Caco-2 (cell line): ENCODE measurements at regions of chr10 and their contacts with region 1.

Region 1: GRCh38 chr10:58467931-58468635 is 44.6 kb upstream of the BICC1 start:
- DNase-seq: peak; percentile 50 to 64
- H3K4me3 ChIP-seq: no peak overlapping the region
- H3K4me3 Mint-ChIP-seq: peak overlapping the region; percentile 39
- H3K27ac Mint-ChIP-seq: peak overlapping the region; percentile 69
- H3K4me1 ChIP-seq: peaks cover 45% of the 10 kb centered on the region
- H3K4me1 Mint-ChIP-seq: peaks cover 30% of the 10 kb centered on the region
- H3K27me3 ChIP-seq: no peaks in the 10 kb centered on the region
- H3K27me3 Mint-ChIP-seq: no peaks in the 10 kb centered on the region
- CTCF ChIP-seq: no peak

Region 2: GRCh38 chr10:58268870-58269605 is 199.0 kb before region 1 on chr10 and contains the start of gene CISD1:
- CTCF ChIA-PET with region 1: no interaction called
- POLR2A ChIA-PET with region 1: interaction called, 7 read pairs
- intact Hi-C with region 1: loop called (anchors 1 kb)
- DNase-seq: peak; percentile 100
- H3K4me3 ChIP-seq: peak within 1 kb of the TSS; percentile 100
- H3K4me3 Mint-ChIP-seq: peak within 1 kb of the TSS; percentile 96
- H3K27ac Mint-ChIP-seq: peak within 1 kb of the TSS; percentile 98
- H3K4me1 ChIP-seq: peaks cover 18% of the 10 kb centered on the region
- H3K4me1 Mint-ChIP-seq: peaks cover 7% of the 10 kb centered on the region
- H3K27me3 ChIP-seq: no peaks in the 10 kb centered on the region
- H3K27me3 Mint-ChIP-seq: no peaks in the 10 kb centered on the region
- CTCF ChIP-seq: no peak
- total RNA-seq, gene CISD1: 98.3 and 99.3 TPM in 2 replicates

Region 3: GRCh38 chr10:58311026-58311425 is 157.1 kb before region 1 on chr10:
- CTCF ChIA-PET with region 1: no interaction called
- POLR2A ChIA-PET with region 1: no interaction called
- intact Hi-C with region 1: no loop called
- DNase-seq: no peak
- H3K4me3 ChIP-seq: no peak overlapping the region
- H3K4me3 Mint-ChIP-seq: no peak overlapping the region
- H3K27ac Mint-ChIP-seq: no peak overlapping the region
- H3K4me1 ChIP-seq: 0 out of 2 replicates have a peak, but pooled peaks cover 3% of the 10 kb centered on the region
- H3K4me1 Mint-ChIP-seq: peaks cover 3% of the 10 kb centered on the region
- H3K27me3 ChIP-seq: 0 out of 2 replicates have a peak, but pooled peaks cover 1% of the 10 kb centered on the region
- H3K27me3 Mint-ChIP-seq: peaks cover 3% of the 10 kb centered on the region
- CTCF ChIP-seq: no peak

Region 4: DNA sequence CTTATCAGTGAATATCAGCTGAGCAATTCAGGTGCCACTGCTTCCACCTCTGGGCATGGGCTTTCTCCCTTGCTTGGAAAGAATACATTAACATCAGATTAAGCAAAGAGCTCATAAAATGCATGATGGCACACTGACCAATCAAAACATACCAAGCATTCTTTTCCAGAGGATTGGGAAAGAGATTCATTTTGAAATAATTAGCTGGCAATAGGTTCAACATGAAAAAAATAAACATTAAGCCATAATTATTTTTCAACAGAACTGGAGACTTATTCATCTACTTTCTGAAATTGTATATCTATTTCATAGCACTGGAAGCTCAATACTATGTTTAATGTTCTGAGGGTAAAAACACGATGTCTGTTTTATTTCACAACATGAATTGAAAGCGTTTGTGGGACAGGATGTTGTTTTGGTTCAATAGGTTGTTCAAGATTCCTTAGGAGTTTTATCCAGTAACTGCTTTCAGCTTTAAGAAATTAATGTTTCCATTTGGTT is 29.7 kb before region 1 on chr10:
- CTCF ChIA-PET with region 1: no interaction called
- POLR2A ChIA-PET with region 1: no interaction called
- intact Hi-C with region 1: loop called (anchors 1 kb)
- DNase-seq: no peak
- H3K4me3 ChIP-seq: no peak overlapping the region
- H3K4me3 Mint-ChIP-seq: no peak overlapping the region
- H3K27ac Mint-ChIP-seq: no peak overlapping the region
- H3K4me1 ChIP-seq: peaks cover 25% of the 10 kb centered on the region
- H3K4me1 Mint-ChIP-seq: peaks cover 19% of the 10 kb centered on the region
- H3K27me3 ChIP-seq: no peaks in the 10 kb centered on the region
- H3K27me3 Mint-ChIP-seq: no peaks in the 10 kb centered on the region
- CTCF ChIP-seq: no peak

Region 5: GRCh38 chr10:58513188-58514110 is 45.4 kb after region 1 on chr10:
- CTCF ChIA-PET with region 1: interaction called, 3 read pairs
- POLR2A ChIA-PET with region 1: no interaction called
- intact Hi-C with region 1: loop called (anchors 1 kb)
- DNase-seq: peak; percentile 89 to 91
- H3K4me3 ChIP-seq: peak overlapping the region; percentile 98
- H3K4me3 Mint-ChIP-seq: peak overlapping the region; percentile 94
- H3K27ac Mint-ChIP-seq: peak overlapping the region; percentile 78
- H3K4me1 ChIP-seq: peaks cover 33% of the 10 kb centered on the region
- H3K4me1 Mint-ChIP-seq: peaks cover 19% of the 10 kb centered on the region
- H3K27me3 ChIP-seq: no peaks in the 10 kb centered on the region
- H3K27me3 Mint-ChIP-seq: no peaks in the 10 kb centered on the region
- CTCF ChIP-seq: no peak

Region 6: DNA sequence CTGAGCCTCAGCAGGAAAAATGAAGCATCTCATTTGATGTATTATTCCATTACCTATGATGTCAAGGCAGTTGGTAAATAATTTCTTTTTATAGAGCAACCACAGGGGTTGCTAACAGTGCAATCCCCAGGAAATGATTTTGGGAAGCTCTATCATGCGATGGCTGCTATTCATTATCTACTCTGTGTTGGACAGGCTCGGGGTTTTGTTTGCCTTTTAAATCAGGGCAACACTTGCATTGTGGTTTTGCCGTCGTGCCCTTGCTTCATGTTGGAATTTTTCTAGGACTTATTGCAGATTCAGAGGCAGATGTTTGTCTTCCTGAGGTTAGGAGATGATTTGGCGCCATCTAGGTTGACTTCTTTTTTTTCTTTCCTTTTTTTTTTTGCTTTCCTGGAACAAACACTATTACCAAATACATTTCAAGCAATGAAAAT is 173.0 kb after region 1 on chr10:
- CTCF ChIA-PET with region 1: no interaction called
- POLR2A ChIA-PET with region 1: no interaction called
- intact Hi-C with region 1: loop called (anchors 1 kb)
- DNase-seq: peak; percentile 70 to 77
- H3K4me3 ChIP-seq: no peak overlapping the region
- H3K4me3 Mint-ChIP-seq: peak overlapping the region; percentile 44
- H3K27ac Mint-ChIP-seq: peak overlapping the region; percentile 60
- H3K4me1 ChIP-seq: peaks cover 42% of the 10 kb centered on the region
- H3K4me1 Mint-ChIP-seq: peaks cover 55% of the 10 kb centered on the region
- H3K27me3 ChIP-seq: no peaks in the 10 kb centered on the region
- H3K27me3 Mint-ChIP-seq: no peaks in the 10 kb centered on the region
- CTCF ChIP-seq: peak; percentile 60 to 73

Region 7: DNA sequence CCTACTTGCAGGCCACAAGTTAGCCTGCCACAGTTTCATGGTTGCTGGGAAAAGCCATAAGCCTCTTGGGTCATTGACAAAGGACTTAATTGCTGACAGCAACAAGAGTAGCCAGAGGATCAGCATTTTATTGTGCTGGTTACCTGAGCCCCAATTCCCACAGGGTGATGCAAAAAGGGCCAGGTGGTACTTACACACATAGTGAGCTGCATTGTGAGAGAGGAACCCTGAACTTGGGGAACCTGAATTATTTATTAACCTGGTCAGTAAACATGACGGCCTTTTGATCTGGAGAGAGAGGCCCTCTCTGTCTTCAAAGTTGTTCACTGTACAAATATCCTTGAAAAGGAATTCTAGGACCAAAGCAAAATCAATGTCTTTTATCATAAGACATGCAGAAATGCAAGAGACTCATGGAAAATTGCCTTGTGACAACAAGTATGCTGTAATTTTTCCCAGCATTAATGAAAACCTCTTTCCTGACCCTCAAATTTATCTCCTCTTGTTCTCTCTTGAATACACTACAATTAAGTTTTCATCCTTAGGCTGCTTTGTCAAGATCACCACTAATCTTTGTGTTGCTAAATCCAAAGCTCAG is 605.5 kb after region 1 on chr10:
- CTCF ChIA-PET with region 1: no interaction called
- POLR2A ChIA-PET with region 1: no interaction called
- intact Hi-C with region 1: loop called (anchors 1 kb)
- DNase-seq: peak; percentile 91 to 94
- H3K4me3 ChIP-seq: no peak overlapping the region
- H3K4me3 Mint-ChIP-seq: no peak overlapping the region
- H3K27ac Mint-ChIP-seq: no peak overlapping the region
- H3K4me1 ChIP-seq: peaks cover 55% of the 10 kb centered on the region
- H3K4me1 Mint-ChIP-seq: peaks cover 13% of the 10 kb centered on the region
- H3K27me3 ChIP-seq: no peaks in the 10 kb centered on the region
- H3K27me3 Mint-ChIP-seq: no peaks in the 10 kb centered on the region
- CTCF ChIP-seq: no peak